RWPE1 (cell line): ENCODE measurements at regions of chr15 and their contacts with region 1.

Region 1: DNA sequence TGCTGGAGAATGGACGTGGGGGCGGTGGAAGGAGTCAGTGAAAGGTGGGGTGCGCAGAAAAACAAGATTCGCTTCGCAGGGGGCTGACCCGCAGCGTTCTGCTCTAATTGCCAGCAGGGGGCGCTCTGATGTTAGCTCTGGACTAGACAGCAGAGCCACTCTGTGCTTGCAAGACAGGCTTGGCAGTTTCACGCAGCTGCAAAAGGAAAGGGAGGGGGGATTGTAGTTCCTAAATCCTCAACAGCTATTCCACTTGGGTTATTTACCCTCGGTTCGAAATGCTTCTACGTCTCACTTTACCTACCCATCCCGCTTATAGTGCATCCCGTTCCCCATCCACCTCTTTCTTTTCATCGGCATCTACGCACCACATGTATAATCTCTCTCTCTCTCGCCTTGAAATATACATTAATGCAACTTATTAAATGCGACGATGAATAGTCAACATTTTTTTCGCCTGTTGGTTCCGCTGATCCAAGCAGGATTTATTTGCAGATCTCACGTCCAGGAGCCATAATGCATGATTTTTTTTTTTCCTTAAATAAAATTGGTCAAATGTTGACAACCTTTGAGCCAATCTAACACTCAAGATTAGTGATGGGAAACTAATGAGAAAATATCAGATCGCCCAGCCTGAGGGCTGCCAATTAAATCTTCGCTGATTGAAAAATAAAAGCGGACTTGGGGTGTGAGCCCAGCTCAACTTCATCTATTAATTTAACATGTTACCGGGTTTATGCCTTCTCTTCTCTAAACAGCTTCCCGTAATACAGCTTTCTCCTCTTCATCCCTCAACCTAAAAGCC is 216.4 kb downstream of the MEIS2 start:
- DNase-seq: peak; percentile 80
- H3K27ac ChIP-seq: no peak overlapping the region
- CTCF ChIP-seq: peak; percentile 82

Region 2: GRCh38 chr15:36501063-36501678 is 382.7 kb before region 1 on chr15:
- CTCF ChIA-PET with region 1: no interaction called
- POLR2A ChIA-PET with region 1: no interaction called
- DNase-seq: peak; percentile 45
- H3K27ac ChIP-seq: no peak overlapping the region
- CTCF ChIP-seq: peak; percentile 92

Region 3: DNA sequence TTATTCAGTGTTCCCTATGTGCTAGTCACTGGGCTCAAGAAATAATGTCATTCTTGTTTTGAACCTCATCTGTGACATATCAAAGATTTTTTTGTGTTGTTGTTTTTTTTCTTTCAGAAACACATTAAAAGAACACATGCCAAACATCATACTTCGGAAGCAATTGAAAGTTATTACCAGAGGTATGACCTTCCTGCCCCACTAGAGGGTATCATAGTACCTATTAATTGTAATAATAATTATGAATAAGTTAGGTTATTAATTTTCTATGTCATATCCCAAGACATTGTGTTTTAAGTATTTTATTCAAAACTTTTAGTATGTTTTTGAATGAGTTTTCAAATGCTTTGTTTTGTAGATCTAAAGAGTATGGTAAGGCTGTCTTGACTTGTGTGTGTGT is 238.8 kb before region 1 on chr15:
- CTCF ChIA-PET with region 1: no interaction called
- POLR2A ChIA-PET with region 1: no interaction called
- DNase-seq: peak; percentile 14
- H3K27ac ChIP-seq: no peak overlapping the region
- CTCF ChIP-seq: no peak; the same call in 1 of the 2 replicates

Region 4: GRCh38 chr15:36671017-36671416 is 212.9 kb before region 1 on chr15:
- CTCF ChIA-PET with region 1: interaction called, 10 read pairs
- POLR2A ChIA-PET with region 1: no interaction called
- DNase-seq: no peak
- H3K27ac ChIP-seq: no peak overlapping the region
- CTCF ChIP-seq: no peak

Region 5: GRCh38 chr15:36911322-36911944 is 27.5 kb after region 1 on chr15:
- CTCF ChIA-PET with region 1: no interaction called
- POLR2A ChIA-PET with region 1: no interaction called
- DNase-seq: peak; percentile 44
- H3K27ac ChIP-seq: no peak overlapping the region
- CTCF ChIP-seq: no peak

Region 6: DNA sequence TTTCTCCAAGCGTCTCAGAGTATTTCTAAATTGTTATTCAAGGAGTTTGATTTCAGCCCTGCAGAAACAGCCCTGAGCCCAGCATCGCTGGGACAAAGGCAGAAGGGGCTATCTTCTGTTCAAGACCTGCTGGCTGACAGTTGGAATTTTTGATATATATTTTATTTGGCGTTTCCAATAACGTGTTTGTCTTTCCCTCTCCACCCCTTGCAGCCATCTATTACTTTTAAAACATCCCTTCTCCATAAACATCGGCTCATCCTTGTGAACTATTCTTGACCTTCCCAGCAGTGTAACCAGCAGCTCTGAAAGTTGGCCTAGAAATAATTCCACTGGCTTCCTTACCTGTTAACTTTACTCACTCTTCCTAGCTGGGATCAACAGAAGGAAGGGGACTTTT is 222.0 kb after region 1 on chr15:
- CTCF ChIA-PET with region 1: interaction called, 12 read pairs
- POLR2A ChIA-PET with region 1: interaction called, 4 read pairs
- DNase-seq: no peak
- H3K27ac ChIP-seq: no peak overlapping the region
- CTCF ChIP-seq: no peak

Region 7: GRCh38 chr15:37134699-37135131 is 250.8 kb after region 1 on chr15:
- CTCF ChIA-PET with region 1: interaction called, 13 read pairs
- POLR2A ChIA-PET with region 1: no interaction called
- DNase-seq: peak; percentile 50
- H3K27ac ChIP-seq: no peak overlapping the region
- CTCF ChIP-seq: peak; percentile 77